ENCODE measurements at regions of chr16 and their contacts with region 1.

Region 1: GRCh38 chr16:19555162-19555937 is at the start of gene VPS35L:
- DNase-seq: peak; percentile 95
- H3K4me3 Mint-ChIP-seq: peak within 1 kb of the TSS; percentile 91
- H3K27ac Mint-ChIP-seq: peak within 1 kb of the TSS; percentile 88
- H3K4me1 Mint-ChIP-seq: peaks cover 14% of the 10 kb centered on the region
- H3K27me3 Mint-ChIP-seq: no peaks in the 10 kb centered on the region
- total RNA-seq, gene VPS35L: 44.3 and 45.7 TPM in 2 replicates

Region 2: GRCh38 chr16:19067349-19068236 is 487.8 kb before region 1 on chr16 and contains the start of gene COQ7:
- intact Hi-C with region 1: loop called (anchors 1 kb)
- DNase-seq: peak; percentile 98
- H3K4me3 Mint-ChIP-seq: peak within 1 kb of the TSS; percentile 88
- H3K27ac Mint-ChIP-seq: peak within 1 kb of the TSS; percentile 88
- H3K4me1 Mint-ChIP-seq: peaks cover 5% of the 10 kb centered on the region
- H3K27me3 Mint-ChIP-seq: no peaks in the 10 kb centered on the region
- total RNA-seq, gene COQ7: 19.5 and 19.7 TPM in 2 replicates

Region 3: DNA sequence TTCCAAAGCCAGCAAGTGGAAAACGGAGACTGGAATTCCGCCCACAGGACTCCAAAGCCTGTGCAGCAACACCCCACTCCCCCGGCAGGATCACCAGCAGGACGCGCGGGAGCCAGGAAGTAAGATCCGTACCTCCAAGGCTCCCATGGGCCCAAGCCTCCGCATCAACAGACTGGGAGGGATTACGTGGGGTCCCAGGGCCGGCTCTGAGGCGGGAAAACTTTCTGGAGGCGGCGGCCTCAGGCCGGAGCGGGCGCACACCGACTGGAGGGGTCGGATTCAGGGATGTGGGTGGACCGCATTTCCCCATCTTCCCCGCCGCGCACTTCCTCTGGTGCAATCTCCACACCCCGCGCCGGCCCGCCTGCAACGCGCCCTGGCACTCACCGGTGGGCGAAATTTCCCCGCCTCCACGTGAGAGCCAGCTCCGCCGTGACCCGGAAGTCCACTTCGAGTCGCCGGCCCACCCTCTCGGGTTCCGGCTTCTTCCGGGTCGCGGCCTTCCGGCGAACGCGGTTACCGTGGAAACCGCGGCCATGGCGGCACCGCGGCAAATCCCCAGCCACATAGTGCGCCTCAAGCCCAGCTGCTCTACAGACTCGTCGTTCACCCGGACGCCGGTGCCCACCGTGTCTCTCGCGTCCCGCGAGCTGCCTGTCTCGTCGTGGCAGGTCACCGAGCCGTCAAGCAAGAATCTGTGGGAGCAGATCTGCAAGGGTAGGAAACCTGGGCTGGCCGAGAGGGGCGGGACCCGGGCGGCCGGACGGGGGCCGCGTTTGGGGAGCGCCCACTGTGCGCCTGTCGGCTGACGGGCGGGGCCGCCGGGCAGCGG is 162.6 kb after region 1 on chr16 and contains the starts of genes IQCK and KNOP1:
- intact Hi-C with region 1: loop called (anchors 1 kb)
- DNase-seq: peak; percentile 85
- H3K4me3 Mint-ChIP-seq: peak within 1 kb of the TSS; percentile 93
- H3K27ac Mint-ChIP-seq: peak within 1 kb of the TSS; percentile 83
- H3K4me1 Mint-ChIP-seq: peaks cover 10% of the 10 kb centered on the region
- H3K27me3 Mint-ChIP-seq: no peaks in the 10 kb centered on the region
- total RNA-seq, gene IQCK: 0.89 and 1.0 TPM in 2 replicates
- total RNA-seq, gene KNOP1: 29.2 and 30.1 TPM in 2 replicates